PC-3 (cell line): ENCODE measurements at regions of chr3 and their contacts with region 1.

Region 1: GRCh38 chr3:31634481-31634880 is 101.8 kb downstream of the STT3B start:
- DNase-seq: peak; percentile 54
- ATAC-seq: peak; percentile 75
- H3K4me3 ChIP-seq: no peak overlapping the region
- H3K27ac ChIP-seq: no peak overlapping the region
- H3K4me1 ChIP-seq: no peaks in the 10 kb centered on the region; the same call in 1 of the 2 replicates
- H3K27me3 ChIP-seq: no peaks in the 10 kb centered on the region
- CTCF ChIP-seq: no peak

Region 2: GRCh38 chr3:31242026-31242960 is 392.2 kb before region 1 on chr3:
- CTCF ChIA-PET with region 1: no interaction called
- POLR2A ChIA-PET with region 1: no interaction called
- intact Hi-C with region 1: no loop called
- DNase-seq: no peak
- ATAC-seq: no peak
- H3K4me3 ChIP-seq: no peak overlapping the region
- H3K27ac ChIP-seq: no peak overlapping the region
- H3K4me1 ChIP-seq: peaks cover 4% of the 10 kb centered on the region; the same call in 1 of the 2 replicates
- H3K27me3 ChIP-seq: no peaks in the 10 kb centered on the region
- CTCF ChIP-seq: no peak

Region 3: GRCh38 chr3:31620656-31621055 is 13.8 kb before region 1 on chr3:
- CTCF ChIA-PET with region 1: no interaction called
- POLR2A ChIA-PET with region 1: no interaction called
- intact Hi-C with region 1: loop called (anchors 2 kb)
- DNase-seq: peak; percentile 21
- ATAC-seq: peak; percentile 69
- H3K4me3 ChIP-seq: no peak overlapping the region
- H3K27ac ChIP-seq: no peak overlapping the region
- H3K4me1 ChIP-seq: 0 out of 2 replicates have a peak, but pooled peaks cover 5% of the 10 kb centered on the region
- H3K27me3 ChIP-seq: no peaks in the 10 kb centered on the region
- CTCF ChIP-seq: no peak

Region 4: DNA sequence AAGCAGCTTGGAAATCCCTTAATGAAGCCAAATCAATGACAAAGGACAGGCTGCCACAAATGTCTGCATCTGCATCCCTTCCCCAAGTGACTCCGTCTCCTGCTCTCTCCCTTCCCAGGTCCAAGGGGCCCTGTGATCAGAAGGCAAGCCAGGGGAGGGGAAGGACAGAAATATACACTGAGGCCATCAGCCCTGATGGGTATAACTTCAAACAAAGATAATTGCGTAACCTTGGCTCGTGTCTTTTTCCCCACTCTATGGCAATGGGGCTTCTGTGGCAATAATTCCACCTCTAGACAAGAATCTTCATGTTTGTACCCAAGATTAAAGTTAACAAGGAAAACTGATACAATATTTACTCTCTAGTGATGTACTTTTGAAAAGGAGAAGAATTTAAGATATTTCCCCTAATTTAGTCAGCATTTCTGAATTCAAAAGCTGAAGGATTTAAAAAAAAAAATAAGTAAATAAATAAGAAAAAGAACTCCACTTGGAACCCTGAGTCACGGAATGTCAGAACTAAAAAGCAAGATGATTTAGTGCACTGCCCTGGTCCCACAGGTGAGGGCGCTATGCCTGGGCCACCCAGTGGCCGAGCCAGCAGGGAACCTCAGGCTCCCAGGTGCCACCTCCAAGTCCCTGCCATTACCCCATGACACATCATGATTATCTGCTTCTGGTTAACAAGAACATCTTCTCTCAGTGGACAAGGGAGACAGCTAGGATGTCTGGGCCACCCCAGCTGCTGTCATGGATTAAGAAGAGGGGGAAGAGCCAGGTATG is 52.7 kb after region 1 on chr3:
- CTCF ChIA-PET with region 1: no interaction called
- POLR2A ChIA-PET with region 1: no interaction called
- intact Hi-C with region 1: no loop called
- DNase-seq: no peak
- ATAC-seq: no peak
- H3K4me3 ChIP-seq: no peak overlapping the region
- H3K27ac ChIP-seq: no peak overlapping the region
- H3K4me1 ChIP-seq: no peaks in the 10 kb centered on the region
- H3K27me3 ChIP-seq: no peaks in the 10 kb centered on the region
- CTCF ChIP-seq: peak; percentile 50

Region 5: GRCh38 chr3:32018757-32019564 is 384.5 kb after region 1 on chr3:
- CTCF ChIA-PET with region 1: no interaction called
- POLR2A ChIA-PET with region 1: no interaction called
- intact Hi-C with region 1: no loop called
- DNase-seq: peak; percentile 78
- ATAC-seq: peak; percentile 73
- H3K4me3 ChIP-seq: peak overlapping the region; percentile 13; the same call in 1 of the 2 replicates
- H3K27ac ChIP-seq: peak overlapping the region; percentile 73
- H3K4me1 ChIP-seq: peaks cover 11% of the 10 kb centered on the region
- H3K27me3 ChIP-seq: no peaks in the 10 kb centered on the region
- CTCF ChIP-seq: peak; percentile 91